ENCODE measurements at regions of chr15 and their contacts with region 1.

Region 1: GRCh38 chr15:65414841-65415621 is 7.7 kb downstream of the IGDCC4 start:
- DNase-seq: no peak
- H3K4me3 ChIP-seq: no peak overlapping the region
- H3K27ac ChIP-seq: peak overlapping the region in 2 of 4 donors; percentile 39 to 40
- H3K4me1 ChIP-seq: peaks cover 0 to 9% (median 0%) of the 10 kb centered on the region in 4 donors
- H3K27me3 ChIP-seq: peaks cover 20% of the 10 kb centered on the region
- CTCF ChIP-seq: no peak
- EP300 ChIP-seq: no peak
- POLR2A ChIP-seq: no peak

Region 2: GRCh38 chr15:63909819-63910437 is 1505.1 kb before region 1 on chr15:
- in situ Hi-C with region 1: no loop called
- intact Hi-C with region 1: loop called (anchors 5 kb)
- DNase-seq: no peak
- H3K4me3 ChIP-seq: no peak overlapping the region
- H3K27ac ChIP-seq: peak overlapping the region in 2 of 4 donors; percentile 4 to 27
- H3K4me1 ChIP-seq: peaks cover 7 to 20% (median 13%) of the 10 kb centered on the region in 4 donors
- H3K27me3 ChIP-seq: no peaks in the 10 kb centered on the region
- CTCF ChIP-seq: no peak
- EP300 ChIP-seq: no peak
- POLR2A ChIP-seq: no peak

Region 3: DNA sequence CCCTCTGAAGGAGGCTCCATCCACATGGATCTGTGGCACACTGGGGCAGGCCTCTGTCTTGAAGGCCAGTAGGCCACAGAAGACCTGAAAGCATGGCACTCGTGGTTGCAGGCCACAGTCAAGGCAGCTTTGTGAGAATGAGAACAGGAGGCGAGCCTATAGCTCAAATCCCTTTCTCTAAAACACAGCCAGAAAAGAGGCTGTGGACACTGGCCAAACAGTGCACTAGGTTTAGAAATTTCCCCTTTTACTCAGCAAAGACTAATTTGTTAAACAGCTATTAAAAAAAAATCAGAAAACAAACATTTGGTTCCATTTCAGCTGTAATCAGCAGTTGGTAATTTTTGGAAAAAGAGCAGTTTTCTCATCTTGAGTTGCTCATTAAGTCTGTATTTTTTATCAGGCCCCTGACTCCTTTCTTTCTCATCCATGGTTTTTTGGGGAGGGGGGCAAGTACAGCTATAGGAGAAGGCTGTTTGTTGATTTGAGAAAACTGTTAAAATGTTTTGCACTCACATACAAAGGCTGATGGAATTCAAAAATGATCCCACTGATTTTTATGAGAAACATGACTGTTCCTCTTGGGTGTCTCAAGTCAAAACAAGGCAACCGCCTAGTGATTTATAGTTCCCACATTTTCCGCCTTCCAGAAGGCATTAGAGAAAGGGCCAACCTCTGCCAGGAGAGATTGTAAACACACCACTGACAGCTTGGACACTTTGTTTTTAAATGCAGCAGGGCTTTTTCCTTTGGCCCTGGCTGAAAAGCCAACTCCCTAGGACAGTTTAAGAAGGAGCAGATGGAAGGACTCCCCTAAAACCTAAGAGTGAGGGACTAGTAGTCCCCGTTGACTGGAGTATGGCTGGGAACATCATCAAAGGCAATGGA is 156.4 kb before region 1 on chr15:
- in situ Hi-C with region 1: no loop called
- intact Hi-C with region 1: no loop called
- DNase-seq: no peak
- H3K4me3 ChIP-seq: no peak overlapping the region
- H3K27ac ChIP-seq: peak overlapping the region; percentile 74 to 86 (median 82)
- H3K4me1 ChIP-seq: peaks cover 13 to 40% (median 24%) of the 10 kb centered on the region in 4 donors
- H3K27me3 ChIP-seq: no peaks in the 10 kb centered on the region
- CTCF ChIP-seq: no peak
- EP300 ChIP-seq: no peak
- POLR2A ChIP-seq: no peak

Region 4: DNA sequence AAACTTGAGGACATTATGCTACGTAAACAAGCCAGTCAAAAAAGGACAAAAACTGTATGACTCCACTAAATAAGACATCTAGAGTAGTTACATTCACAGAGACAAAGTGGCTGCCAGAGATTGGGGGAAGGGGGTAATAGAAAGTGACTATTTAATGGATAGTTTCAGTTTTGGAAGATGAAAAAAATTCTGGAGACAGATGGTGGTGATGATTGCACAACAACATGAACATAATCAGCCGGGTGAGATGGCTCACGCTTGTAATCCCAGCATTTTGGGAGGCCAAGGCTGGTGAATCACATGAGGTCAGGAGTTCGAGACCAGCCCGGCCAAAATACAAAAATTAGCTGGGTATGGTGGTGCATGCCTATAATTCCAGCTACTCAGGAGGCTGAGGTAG is 61.9 kb after region 1 on chr15:
- in situ Hi-C with region 1: no loop called
- intact Hi-C with region 1: no loop called
- DNase-seq: no peak
- H3K4me3 ChIP-seq: no peak overlapping the region
- H3K27ac ChIP-seq: no peak overlapping the region
- H3K4me1 ChIP-seq: no peaks in the 10 kb centered on the region
- H3K27me3 ChIP-seq: no peaks in the 10 kb centered on the region
- CTCF ChIP-seq: no peak
- EP300 ChIP-seq: no peak
- POLR2A ChIP-seq: no peak

Measured in transverse colon (tissue), 4 donors.